ENCODE measurements at regions of chr20 and their contacts with region 1.

Region 1: DNA sequence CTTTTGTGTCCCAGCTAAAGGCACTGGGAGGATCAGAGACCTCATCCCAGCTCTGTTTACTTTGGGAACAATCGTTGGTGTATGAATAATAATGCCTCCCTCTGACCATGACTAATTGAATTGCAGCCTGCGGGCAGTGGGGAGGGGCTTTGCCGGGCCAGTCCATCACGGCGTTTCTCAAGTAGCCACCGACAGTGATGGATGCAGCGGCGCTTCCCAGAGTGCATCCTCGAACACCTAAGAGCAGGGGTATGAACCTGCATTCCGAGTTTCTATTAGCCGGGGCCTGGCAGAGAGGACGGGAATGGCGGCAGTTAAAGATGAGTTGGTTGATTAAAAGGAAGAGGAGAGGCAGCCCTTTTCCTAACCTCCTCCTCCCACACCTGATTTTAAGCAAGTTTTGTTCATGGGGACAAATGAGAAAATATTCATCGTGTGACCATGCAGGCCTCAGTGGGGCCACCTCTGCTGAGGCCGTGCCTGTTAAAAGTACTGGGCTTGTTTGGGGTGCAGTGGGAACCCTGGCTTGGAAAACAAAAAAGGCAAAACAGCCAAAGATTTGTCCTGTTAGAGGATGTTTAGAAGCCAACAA is 154.1 kb downstream of the FOXA2 start:
- DNase-seq: peak; percentile 88 to 92
- ATAC-seq: peak; percentile 88 to 90
- H3K4me3 ChIP-seq: peak overlapping the region; percentile 9; the same call in 2 of the 3 replicates
- H3K27ac ChIP-seq: peak overlapping the region; percentile 83 to 90
- H3K4me1 ChIP-seq: peaks cover 54% of the 10 kb centered on the region
- CTCF ChIP-seq: no peak; the same call in 2 of the 3 replicates
- EP300 ChIP-seq: peak in 1 of 2 experiments; percentile 58; a peak in 1 of 5 replicates
- POLR2A ChIP-seq: 0 out of 2 replicates have a peak, but pooled peaks have one; percentile 10
- RAD21 ChIP-seq: peak; percentile 28 to 48; a peak in 3 of 5 replicates

Region 2: DNA sequence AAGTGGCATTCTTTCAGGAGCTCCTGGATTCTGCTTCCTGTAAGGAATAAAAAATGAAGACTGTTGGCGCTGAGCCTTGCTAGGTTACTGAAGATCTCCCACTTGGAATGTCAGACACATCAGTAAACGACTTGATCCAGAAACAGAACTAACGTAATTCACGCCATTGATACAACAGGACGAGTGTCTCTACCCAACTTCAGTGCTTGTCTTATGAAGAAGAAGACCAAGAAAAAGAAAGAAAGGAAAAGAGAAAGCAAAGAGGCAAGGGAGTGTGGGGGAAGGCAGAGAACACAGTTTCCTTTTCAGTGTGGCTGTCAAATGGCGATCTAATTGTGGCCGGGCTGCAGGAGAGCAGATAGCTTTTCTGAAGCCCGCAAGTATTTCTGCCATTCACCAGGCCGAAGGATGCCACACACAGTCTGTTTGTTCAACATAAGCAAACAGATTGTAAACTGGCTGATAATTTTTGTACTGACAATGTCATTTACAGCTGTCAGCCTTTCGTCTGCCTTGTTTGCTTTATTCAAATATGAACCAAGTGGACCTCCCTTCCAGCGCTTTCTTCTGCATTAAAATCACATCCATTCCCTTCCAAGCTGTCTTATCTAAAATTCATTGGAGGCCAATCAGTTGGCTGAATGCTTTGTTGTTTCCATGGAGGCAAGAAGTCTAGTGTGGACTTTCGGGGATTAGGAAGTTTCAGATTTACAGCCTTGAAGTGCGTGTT is 26.5 kb before region 1 on chr20:
- CTCF ChIA-PET with region 1: interaction called, 5 read pairs
- POLR2A ChIA-PET with region 1: interaction called, 11 read pairs
- DNase-seq: peak in 1 of 2 experiments; percentile 92
- ATAC-seq: peak; percentile 62 to 78
- H3K4me3 ChIP-seq: peak overlapping the region; percentile 25
- H3K27ac ChIP-seq: peak overlapping the region; percentile 88 to 98
- H3K4me1 ChIP-seq: peaks cover 62% of the 10 kb centered on the region
- CTCF ChIP-seq: no peak; the same call in 2 of the 3 replicates
- EP300 ChIP-seq: peak; percentile 62 to 74; a peak in 2 of 5 replicates
- POLR2A ChIP-seq: no peak
- RAD21 ChIP-seq: peak in 1 of 2 experiments; percentile 9; a peak in 2 of 5 replicates

Region 3: GRCh38 chr20:22411627-22412450 is 18.4 kb before region 1 on chr20:
- CTCF ChIA-PET with region 1: interaction called, 25 read pairs
- POLR2A ChIA-PET with region 1: interaction called, 9 read pairs
- DNase-seq: peak; percentile 97 to 99
- ATAC-seq: peak; percentile 96 to 98
- H3K4me3 ChIP-seq: 0 out of 3 replicates have a peak overlapping the region, but pooled peaks have one; percentile 12
- H3K27ac ChIP-seq: peak overlapping the region; percentile 97 to 98
- H3K4me1 ChIP-seq: peaks cover 62% of the 10 kb centered on the region
- CTCF ChIP-seq: no peak
- EP300 ChIP-seq: peak; percentile 76 to 91
- POLR2A ChIP-seq: no peak
- RAD21 ChIP-seq: peak; percentile 44 to 52; a peak in 4 of 5 replicates

Measured in A549 (cell line).